Aorta (tissue), 5 donors: ENCODE measurements at regions of chr9 and their contacts with region 1.

Region 1: DNA sequence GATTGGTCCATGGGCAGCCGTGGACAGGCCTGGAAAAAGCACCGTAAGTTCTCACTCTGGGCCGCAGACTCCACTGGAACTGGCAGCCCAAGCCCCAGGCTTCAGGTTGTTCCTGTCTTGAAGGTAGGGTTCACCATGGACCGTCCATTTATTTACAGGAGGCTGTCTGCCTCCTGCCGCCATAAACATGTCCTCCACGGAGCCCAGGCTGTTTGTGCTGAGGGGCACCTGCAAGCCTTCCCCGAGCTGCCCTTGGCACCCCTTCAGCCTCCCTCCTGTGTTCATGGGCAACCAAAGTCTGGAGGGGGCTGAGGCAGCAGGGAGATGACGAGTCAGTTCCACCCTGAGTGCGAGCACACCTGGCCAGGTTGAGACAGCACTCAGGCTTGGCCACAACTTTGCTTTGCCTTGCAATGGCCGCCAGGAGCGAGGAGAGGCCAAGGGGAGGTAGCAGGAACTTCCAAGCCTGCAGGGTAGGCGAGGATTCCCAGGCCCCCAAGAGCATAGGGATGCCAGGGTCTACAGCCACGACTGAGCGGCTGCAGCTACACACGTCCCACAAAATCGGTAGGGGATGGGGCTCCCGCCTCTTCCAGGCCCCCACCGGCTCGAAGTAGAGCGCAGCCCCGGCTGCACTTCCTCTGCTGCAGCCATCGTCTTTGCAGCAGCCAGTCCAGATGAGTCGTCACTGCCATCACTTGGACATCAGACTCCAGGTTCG is 1625.6 kb upstream of the ACO1 start:
- DNase-seq: no peak
- ATAC-seq: peak; percentile 36
- H3K4me3 ChIP-seq: no peak overlapping the region
- H3K27ac ChIP-seq: no peak overlapping the region
- H3K4me1 ChIP-seq: no peaks in the 10 kb centered on the region
- H3K27me3 ChIP-seq: no peaks in the 10 kb centered on the region

Region 2: DNA sequence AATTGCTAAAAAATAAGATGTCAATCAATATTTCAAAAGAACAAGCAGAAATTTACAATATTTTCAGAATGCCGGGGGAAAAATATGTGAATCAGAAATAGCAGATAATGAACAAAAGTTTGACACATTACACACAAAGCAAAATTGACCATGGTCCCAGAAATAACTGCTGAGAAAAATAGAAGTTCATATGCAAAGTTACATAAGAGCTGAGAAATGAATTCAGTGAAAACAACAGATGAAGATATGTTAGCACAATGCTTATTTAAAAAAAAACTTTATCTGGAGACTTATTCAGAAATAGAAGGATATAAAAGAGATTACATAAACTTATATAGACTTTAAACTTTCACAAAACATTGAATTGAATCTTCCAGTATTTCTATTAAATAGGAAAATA is 141.8 kb after region 1 on chr9:
- intact Hi-C with region 1: loop called in 1 of 2 experiments (anchors 5 kb)
- DNase-seq: no peak
- ATAC-seq: no peak
- H3K4me3 ChIP-seq: no peak overlapping the region
- H3K27ac ChIP-seq: no peak overlapping the region
- H3K4me1 ChIP-seq: no peaks in the 10 kb centered on the region
- H3K27me3 ChIP-seq: no peaks in the 10 kb centered on the region